HEK293T (cell line): ENCODE measurements at regions of chr4 and their contacts with region 1.

Region 1: DNA sequence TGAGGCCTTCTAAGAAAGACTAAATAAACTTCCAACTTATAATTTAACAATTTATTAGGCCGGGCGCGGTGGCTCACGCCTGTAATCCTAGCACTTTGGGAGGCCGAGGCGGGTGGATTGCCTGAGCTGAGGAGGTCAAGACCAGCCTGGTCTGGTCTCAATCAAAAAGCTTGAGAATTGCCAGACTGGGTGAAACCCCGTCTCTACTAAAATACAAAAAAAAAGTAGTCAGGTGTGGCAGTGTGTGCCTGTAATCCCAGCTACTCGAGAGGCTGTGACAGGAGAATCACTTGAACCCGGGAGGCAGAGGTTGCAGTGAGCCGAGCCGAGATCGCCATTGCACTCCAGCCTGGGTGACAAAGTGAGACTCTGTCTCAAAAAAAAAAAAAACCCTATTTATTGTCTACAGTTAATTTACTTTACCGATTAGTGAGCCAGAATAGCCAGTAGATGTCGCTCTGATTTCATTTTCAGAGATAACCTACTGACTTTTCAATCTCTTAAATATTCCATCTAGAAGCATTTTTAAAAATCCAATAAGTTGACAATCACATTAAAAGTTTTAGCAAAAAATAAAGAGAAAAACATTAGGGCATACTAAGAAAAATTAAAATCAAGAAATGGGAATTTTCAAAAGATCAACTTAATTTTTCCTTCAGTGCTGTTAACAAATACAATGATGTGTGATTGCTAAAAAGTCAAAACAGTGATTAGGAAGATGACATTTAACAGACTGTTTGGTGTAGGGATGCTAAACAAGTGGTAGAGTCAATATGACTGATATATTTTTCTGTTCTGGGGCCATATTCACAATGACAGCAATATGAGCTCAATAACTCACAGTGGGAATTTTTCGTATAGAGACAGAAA is 4.3 kb upstream of the SHROOM3 start:
- DNase-seq: peak; percentile 37

Region 2: DNA sequence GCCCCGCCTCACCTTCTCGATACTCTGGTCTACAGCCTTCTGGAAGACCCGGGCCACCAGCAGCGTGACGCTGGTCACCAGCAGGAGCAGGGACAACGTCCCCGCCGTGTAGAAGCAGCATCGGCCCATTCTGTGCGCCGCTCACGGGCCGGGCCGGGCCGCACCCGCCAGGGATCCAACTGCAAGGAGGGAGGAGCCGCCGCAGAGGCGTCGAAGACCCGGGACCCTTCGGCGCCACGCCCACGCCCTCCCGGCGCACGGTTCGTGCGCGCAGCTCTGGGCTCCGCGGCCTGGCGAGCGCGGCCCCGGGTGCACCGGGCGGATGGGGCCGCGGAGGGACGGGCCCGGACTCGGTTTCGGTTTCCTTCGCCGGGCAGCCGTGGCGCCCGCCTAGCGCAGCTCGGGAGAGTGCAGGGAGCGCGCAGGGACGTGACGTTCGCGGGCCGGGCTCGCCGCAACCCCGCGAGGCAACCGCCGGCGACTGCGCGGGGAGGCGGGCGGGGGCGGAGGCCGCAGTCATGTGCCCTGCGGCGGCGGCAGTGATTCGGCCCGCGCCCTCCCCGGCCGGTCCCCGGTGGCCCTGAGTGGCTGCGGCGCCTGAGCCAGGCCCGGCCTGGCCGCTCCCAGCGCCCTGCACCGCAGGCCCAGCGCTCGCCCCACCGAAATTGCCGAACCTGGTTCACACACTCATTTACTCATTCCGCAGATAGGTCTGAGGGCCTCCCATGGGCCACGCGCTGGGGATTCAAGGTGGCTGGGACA is 217.2 kb before region 1 on chr4 and contains the start of gene SCARB2:
- CTCF ChIA-PET with region 1: no interaction called
- POLR2A ChIA-PET with region 1: no interaction called
- DNase-seq: peak; percentile 76

Region 3: GRCh38 chr4:76386566-76387295 is 44.0 kb before region 1 on chr4:
- CTCF ChIA-PET with region 1: no interaction called
- POLR2A ChIA-PET with region 1: no interaction called
- DNase-seq: no peak

Region 4: DNA sequence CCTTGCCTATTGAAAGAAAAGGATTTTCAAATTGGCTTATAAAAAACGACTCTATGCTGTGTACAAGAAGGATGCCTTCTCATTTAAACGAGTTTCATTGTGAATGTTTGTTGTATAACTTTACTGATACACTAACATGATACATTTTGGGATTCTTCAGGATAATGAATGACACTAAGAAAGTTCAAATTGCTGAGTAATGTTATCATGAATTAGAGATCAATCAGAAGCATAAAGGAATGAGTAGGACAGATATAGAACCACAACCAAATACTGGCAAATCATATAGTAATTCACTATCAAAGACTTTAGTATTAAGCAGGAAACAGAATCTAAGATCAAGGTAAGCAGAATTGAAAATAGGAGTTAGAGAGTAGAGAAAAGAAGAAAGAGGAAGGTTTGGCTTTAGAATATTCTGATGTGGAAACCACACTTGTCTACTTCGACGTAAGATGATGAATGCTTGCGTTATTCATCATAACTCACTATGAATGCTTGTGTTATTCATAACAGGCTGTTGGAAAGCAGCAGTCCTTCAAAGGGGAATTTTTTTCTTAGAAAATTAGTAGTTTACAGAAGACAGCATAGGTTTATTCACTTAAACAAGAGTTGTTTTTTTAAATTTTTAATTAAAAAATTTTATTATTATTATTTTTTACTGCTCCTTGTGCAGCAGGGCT is 23.2 kb before region 1 on chr4:
- CTCF ChIA-PET with region 1: no interaction called
- POLR2A ChIA-PET with region 1: no interaction called
- DNase-seq: no peak

Region 5: GRCh38 chr4:76499461-76499860 is 68.7 kb after region 1 on chr4:
- CTCF ChIA-PET with region 1: interaction called, 12 read pairs
- POLR2A ChIA-PET with region 1: no interaction called
- DNase-seq: no peak

Region 6: GRCh38 chr4:76504613-76505465 is 74.1 kb after region 1 on chr4:
- CTCF ChIA-PET with region 1: interaction called, 12 read pairs
- POLR2A ChIA-PET with region 1: no interaction called
- DNase-seq: peak; percentile 37